ENCODE measurements at regions of chr14 and their contacts with region 1.

Region 1: DNA sequence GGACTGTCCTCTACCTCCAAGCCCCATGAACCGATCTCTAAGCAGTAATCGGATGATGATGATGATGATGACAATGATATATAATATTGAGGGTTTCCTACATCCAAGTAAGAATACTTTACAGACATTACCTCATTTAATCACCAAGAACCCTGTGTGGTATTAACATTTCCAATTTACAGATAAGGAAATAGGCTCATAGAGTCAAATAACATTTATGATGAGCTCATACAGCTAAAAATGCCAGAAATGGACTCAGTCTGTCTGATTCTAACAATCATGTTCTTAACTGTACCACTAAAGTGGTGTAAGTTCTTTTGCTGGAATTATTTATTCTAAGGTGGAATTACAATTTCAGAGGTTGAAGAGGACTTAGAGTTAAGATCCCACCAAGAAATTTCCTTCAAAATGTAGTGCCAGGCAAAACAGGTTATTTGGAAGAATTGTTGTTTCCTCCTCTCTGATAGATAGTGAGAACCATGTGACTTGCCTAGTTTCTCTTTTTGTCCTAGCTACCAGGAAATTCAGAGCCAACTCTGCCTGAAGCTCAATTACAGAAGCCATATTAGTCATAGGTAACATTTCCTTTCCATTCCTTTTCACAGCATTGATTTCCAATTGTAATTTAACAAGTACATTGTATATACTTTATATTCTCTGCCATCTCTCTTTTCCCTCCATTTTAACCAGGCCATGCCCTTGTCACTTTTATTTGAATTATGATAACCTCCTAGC is 23.8 kb upstream of the CCDC175 start:
- DNase-seq: no peak
- ATAC-seq: no peak
- H3K4me3 Mint-ChIP-seq: no peak overlapping the region
- H3K27ac Mint-ChIP-seq: no peak overlapping the region
- H3K4me1 Mint-ChIP-seq: no peaks in the 10 kb centered on the region
- H3K27me3 Mint-ChIP-seq: peaks cover 16% of the 10 kb centered on the region

Region 2: DNA sequence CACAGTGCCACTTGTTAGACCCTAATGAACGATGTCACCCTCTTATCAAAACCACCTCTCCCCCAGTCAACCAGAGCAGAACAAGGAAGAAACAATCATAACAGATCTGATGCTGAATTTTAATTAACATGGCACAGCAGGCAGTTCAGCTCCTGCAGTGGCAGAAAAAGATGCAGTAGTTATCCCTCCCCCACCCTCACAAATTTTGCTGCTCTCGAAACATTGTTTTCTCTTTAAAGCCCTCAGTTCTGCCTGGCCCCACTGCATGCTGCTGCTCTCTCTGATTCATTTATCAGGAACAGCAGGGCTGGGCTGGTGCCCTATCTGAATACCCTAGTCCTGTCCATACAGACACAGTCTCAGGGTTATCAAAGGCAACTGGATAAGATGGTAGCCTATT is 36.0 kb before region 1 on chr14:
- CTCF ChIA-PET with region 1: no interaction called
- POLR2A ChIA-PET with region 1: no interaction called
- intact Hi-C with region 1: loop called in 1 of 2 experiments (anchors 1 kb)
- DNase-seq: no peak
- ATAC-seq: no peak
- H3K4me3 Mint-ChIP-seq: no peak overlapping the region
- H3K27ac Mint-ChIP-seq: no peak overlapping the region
- H3K4me1 Mint-ChIP-seq: no peaks in the 10 kb centered on the region
- H3K27me3 Mint-ChIP-seq: peaks cover 12% of the 10 kb centered on the region

Region 3: DNA sequence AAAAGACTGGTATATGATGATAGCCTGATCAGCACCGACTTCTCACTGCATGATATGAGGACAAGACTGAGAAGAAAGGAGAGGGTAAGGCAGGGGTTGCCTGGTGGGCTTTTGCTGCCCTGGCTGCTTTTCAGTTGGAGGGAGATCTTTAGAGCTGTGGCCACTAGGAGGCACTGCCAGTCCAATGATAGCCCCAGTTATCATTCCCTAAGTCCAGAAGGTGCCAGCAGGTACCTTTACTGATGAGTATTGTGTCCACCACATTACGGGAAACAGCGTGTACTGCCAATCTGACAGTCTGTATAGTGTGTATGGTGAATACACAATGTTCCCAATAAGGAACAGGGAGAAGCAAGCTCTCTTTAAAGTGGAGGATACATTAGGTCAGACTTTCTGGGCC is 32.0 kb after region 1 on chr14:
- CTCF ChIA-PET with region 1: no interaction called
- POLR2A ChIA-PET with region 1: no interaction called
- intact Hi-C with region 1: no loop called
- DNase-seq: peak; percentile 52
- ATAC-seq: no peak
- H3K4me3 Mint-ChIP-seq: no peak overlapping the region
- H3K27ac Mint-ChIP-seq: no peak overlapping the region
- H3K4me1 Mint-ChIP-seq: peaks cover 2% of the 10 kb centered on the region
- H3K27me3 Mint-ChIP-seq: peaks cover 45% of the 10 kb centered on the region